Vagina (tissue), 2 donors: ENCODE measurements at regions of chr19 and their contacts with region 1.

Region 1: DNA sequence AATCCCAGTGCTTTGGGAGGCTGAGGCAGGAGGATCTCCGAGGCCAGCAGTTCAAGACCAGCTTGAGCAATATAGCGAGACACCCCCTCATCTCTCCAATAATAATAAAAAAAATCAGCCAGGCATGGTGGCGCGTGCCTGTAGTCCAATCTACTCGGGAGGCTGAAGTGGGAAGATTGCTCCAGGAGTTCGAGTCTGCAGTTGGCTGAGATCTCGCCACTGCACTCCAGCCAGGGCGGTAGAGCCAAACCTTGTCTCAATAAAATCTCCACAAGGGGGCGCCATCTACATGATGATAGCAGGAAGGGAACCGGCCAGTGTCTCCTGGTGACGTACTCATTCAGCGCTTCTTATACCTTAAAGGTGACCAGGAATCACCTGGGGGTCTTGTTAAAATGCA is 13.6 kb upstream of the C5AR1 start:
- DNase-seq: no peak
- H3K4me3 ChIP-seq: no peak overlapping the region
- H3K27ac ChIP-seq: no peak overlapping the region
- H3K4me1 ChIP-seq: no peaks in the 10 kb centered on the region
- H3K27me3 ChIP-seq: no peaks in the 10 kb centered on the region
- CTCF ChIP-seq: peak; percentile 42 to 65 (median 63)
- POLR2A ChIP-seq: no peak

Region 2: GRCh38 chr19:47240996-47241918 is 54.8 kb before region 1 on chr19:
- intact Hi-C with region 1: no loop called
- DNase-seq: no peak
- H3K4me3 ChIP-seq: no peak overlapping the region
- H3K27ac ChIP-seq: no peak overlapping the region
- H3K4me1 ChIP-seq: peaks cover 46% of the 10 kb centered on the region
- H3K27me3 ChIP-seq: no peaks in the 10 kb centered on the region
- CTCF ChIP-seq: no peak
- POLR2A ChIP-seq: no peak

Region 3: DNA sequence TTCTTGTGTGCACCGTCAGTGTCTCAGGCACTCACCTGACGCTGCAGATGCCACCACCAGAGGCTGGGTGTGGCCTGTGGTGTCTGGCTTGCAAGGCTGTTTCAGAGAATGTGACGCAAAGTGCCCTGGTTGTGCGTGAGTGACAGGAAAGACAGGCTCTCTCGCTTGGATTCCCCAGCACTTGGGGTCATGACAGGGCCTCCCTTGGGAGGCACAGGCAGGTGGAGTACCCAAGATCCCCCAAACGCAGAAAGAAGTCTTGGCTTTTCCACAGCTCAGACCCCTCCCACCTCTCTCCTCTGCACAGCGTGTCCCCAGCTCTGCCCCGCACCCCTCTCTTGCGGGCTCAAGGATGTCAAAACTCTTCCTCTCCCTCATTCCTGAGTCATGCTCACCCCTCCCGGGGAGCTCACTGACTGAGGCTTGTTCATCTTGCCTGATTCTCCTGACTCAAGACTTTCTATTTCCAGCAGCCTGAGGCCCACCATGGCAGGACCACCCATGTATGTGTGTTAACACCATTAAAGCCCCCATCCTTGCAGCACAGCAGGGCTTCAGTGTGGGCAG is 74.1 kb after region 1 on chr19:
- intact Hi-C with region 1: no loop called
- DNase-seq: no peak
- H3K4me3 ChIP-seq: no peak overlapping the region
- H3K27ac ChIP-seq: no peak overlapping the region
- H3K4me1 ChIP-seq: no peaks in the 10 kb centered on the region
- H3K27me3 ChIP-seq: no peaks in the 10 kb centered on the region
- CTCF ChIP-seq: no peak
- POLR2A ChIP-seq: no peak

Region 4: DNA sequence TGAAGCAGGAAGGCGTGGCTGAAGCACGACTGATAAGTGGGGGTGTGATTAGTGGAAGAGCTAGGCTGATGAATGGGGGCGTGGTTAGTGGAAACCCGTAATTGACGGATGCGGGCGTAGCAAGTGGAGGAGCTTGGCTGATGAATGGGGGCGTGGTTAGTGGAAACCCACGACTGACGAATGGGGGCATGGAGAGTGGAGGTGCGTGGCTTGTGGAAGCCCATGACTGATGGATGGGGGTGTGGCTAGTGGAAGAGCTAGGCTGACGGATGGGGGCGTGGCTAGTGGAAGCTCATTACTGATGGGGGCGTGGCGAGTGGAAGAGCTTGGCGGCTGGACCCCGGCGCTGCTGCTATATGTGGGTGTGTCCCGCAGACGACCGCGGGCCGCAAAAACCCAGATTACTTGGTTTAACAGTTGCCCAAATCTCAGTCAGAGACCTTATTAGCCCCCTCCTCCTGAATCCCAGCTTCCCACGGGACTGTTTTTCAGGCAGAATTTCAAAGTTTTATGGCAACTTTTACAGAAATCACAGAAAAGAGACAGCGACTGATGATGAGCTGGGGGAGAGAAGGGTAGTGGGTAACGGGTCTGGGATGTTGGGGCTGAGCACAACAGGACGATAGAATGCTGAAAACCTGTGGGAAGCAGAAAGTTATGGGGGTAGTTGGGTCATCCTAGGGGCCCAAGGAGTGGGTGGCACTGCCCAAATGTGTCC is 132.3 kb after region 1 on chr19:
- intact Hi-C with region 1: loop called (anchors 10 kb)
- DNase-seq: no peak
- H3K4me3 ChIP-seq: peak overlapping the region; percentile 1 to 21
- H3K27ac ChIP-seq: peak overlapping the region; percentile 11
- H3K4me1 ChIP-seq: peaks cover 25% of the 10 kb centered on the region
- H3K27me3 ChIP-seq: peaks cover 4% of the 10 kb centered on the region
- CTCF ChIP-seq: no peak
- POLR2A ChIP-seq: no peak